ENCODE measurements at regions of chr13 and their contacts with region 1.

Region 1: GRCh38 chr13:45412274-45413049 is 5.7 kb downstream of the SLC25A30 start:
- DNase-seq: peak; percentile 69
- ATAC-seq: peak; percentile 54
- H3K4me3 ChIP-seq: no peak overlapping the region
- H3K27ac ChIP-seq: no peak overlapping the region
- H3K4me1 ChIP-seq: peaks cover 6% of the 10 kb centered on the region
- H3K27me3 ChIP-seq: no peaks in the 10 kb centered on the region
- CTCF ChIP-seq: no peak
- POLR2A ChIP-seq: no peak
- RAD21 ChIP-seq: no peak

Region 2: GRCh38 chr13:45448965-45449559 is 36.6 kb after region 1 on chr13:
- CTCF ChIA-PET with region 1: no interaction called
- POLR2A ChIA-PET with region 1: no interaction called
- dilution Hi-C with region 1: no loop called
- in situ Hi-C with region 1: no loop called
- intact Hi-C with region 1: loop called (anchors 1 kb)
- DNase-seq: no peak
- ATAC-seq: no peak
- H3K4me3 ChIP-seq: no peak overlapping the region
- H3K27ac ChIP-seq: no peak overlapping the region
- H3K4me1 ChIP-seq: no peaks in the 10 kb centered on the region
- H3K27me3 ChIP-seq: peaks cover 10% of the 10 kb centered on the region
- CTCF ChIP-seq: no peak
- POLR2A ChIP-seq: no peak
- RAD21 ChIP-seq: no peak

Region 3: GRCh38 chr13:46202188-46202795 is 789.8 kb after region 1 on chr13:
- CTCF ChIA-PET with region 1: no interaction called
- POLR2A ChIA-PET with region 1: no interaction called
- dilution Hi-C with region 1: no loop called
- in situ Hi-C with region 1: no loop called
- intact Hi-C with region 1: no loop called
- DNase-seq: no peak
- ATAC-seq: no peak
- H3K4me3 ChIP-seq: no peak overlapping the region
- H3K27ac ChIP-seq: no peak overlapping the region
- H3K4me1 ChIP-seq: no peaks in the 10 kb centered on the region
- H3K27me3 ChIP-seq: no peaks in the 10 kb centered on the region
- CTCF ChIP-seq: no peak
- POLR2A ChIP-seq: no peak
- RAD21 ChIP-seq: no peak

Measured in IMR-90 (cell line).